ENCODE measurements at regions of chr1 and their contacts with region 1.

Region 1: GRCh38 chr1:30801771-30802198 is 44.2 kb upstream of the LAPTM5 start:
- DNase-seq: peak; percentile 31 to 84 (median 71)
- ATAC-seq: peak; percentile 68 to 81 (median 72)
- H3K4me3 ChIP-seq: no peak overlapping the region
- H3K4me3 Mint-ChIP-seq: no peak overlapping the region
- H3K27ac ChIP-seq: no peak overlapping the region
- H3K27ac Mint-ChIP-seq: peak overlapping the region in 1 of 2 donors; percentile 36
- H3K4me1 ChIP-seq: peaks cover 0 to 8% of the 10 kb centered on the region in 2 experiments
- H3K4me1 Mint-ChIP-seq: peaks cover 4 to 6% (median 4%) of the 10 kb centered on the region in 3 donors
- H3K27me3 ChIP-seq: peaks cover 5 to 50% of the 10 kb centered on the region in 2 experiments
- H3K27me3 Mint-ChIP-seq: peaks cover 25 to 31% of the 10 kb centered on the region in 2 donors

Region 2: GRCh38 chr1:30724175-30724574 is 77.6 kb before region 1 on chr1:
- CTCF ChIA-PET with region 1: interaction called in 1 of 2 experiments, 13 read pairs
- POLR2A ChIA-PET with region 1: interaction called in 1 of 2 experiments, 14 read pairs
- DNase-seq: no peak
- ATAC-seq: no peak
- H3K4me3 ChIP-seq: no peak overlapping the region
- H3K4me3 Mint-ChIP-seq: no peak overlapping the region
- H3K27ac ChIP-seq: no peak overlapping the region
- H3K27ac Mint-ChIP-seq: peak overlapping the region; percentile 31 to 62
- H3K4me1 ChIP-seq: peaks cover 0 to 38% of the 10 kb centered on the region in 2 experiments
- H3K4me1 Mint-ChIP-seq: peaks cover 27 to 53% (median 41%) of the 10 kb centered on the region in 3 donors
- H3K27me3 ChIP-seq: no peaks in the 10 kb centered on the region
- H3K27me3 Mint-ChIP-seq: no peaks in the 10 kb centered on the region

Region 3: GRCh38 chr1:30743584-30744059 is 58.2 kb before region 1 on chr1:
- CTCF ChIA-PET with region 1: no interaction called
- POLR2A ChIA-PET with region 1: no interaction called
- DNase-seq: peak; percentile 32 to 90 (median 74)
- ATAC-seq: peak; percentile 79 to 86 (median 82)
- H3K4me3 ChIP-seq: peak overlapping the region; percentile 32 to 58
- H3K4me3 Mint-ChIP-seq: peak overlapping the region; percentile 50 to 98 (median 80)
- H3K27ac ChIP-seq: peak overlapping the region; percentile 79
- H3K27ac Mint-ChIP-seq: peak overlapping the region; percentile 96 to 98
- H3K4me1 ChIP-seq: peaks cover 75 to 100% of the 10 kb centered on the region in 2 experiments
- H3K4me1 Mint-ChIP-seq: peaks cover 96 to 99% (median 99%) of the 10 kb centered on the region in 3 donors
- H3K27me3 ChIP-seq: no peaks in the 10 kb centered on the region
- H3K27me3 Mint-ChIP-seq: no peaks in the 10 kb centered on the region

Region 4: GRCh38 chr1:30929135-30929889 is 127.5 kb after region 1 on chr1:
- CTCF ChIA-PET with region 1: interaction called, 8 to 10 read pairs
- POLR2A ChIA-PET with region 1: no interaction called
- DNase-seq: peak in 20 of 35 experiments; percentile 12 to 66 (median 36)
- ATAC-seq: peak; percentile 65 to 77 (median 70)
- H3K4me3 ChIP-seq: no peak overlapping the region
- H3K4me3 Mint-ChIP-seq: no peak overlapping the region
- H3K27ac ChIP-seq: peak overlapping the region; percentile 22
- H3K27ac Mint-ChIP-seq: peak overlapping the region; percentile 6 to 16
- H3K4me1 ChIP-seq: peaks cover 0 to 10% of the 10 kb centered on the region in 2 experiments
- H3K4me1 Mint-ChIP-seq: no peaks in the 10 kb centered on the region
- H3K27me3 ChIP-seq: peaks cover 0 to 3% of the 10 kb centered on the region in 2 experiments
- H3K27me3 Mint-ChIP-seq: peaks cover 0 to 2% of the 10 kb centered on the region in 2 donors